ENCODE measurements at regions of chr12 and their contacts with region 1.

Region 1: GRCh38 chr12:53757095-53757770 is 5.5 kb upstream of the CISTR start:
- DNase-seq: no peak
- H3K4me3 ChIP-seq: no peak overlapping the region
- CTCF ChIP-seq: peak; percentile 85

Region 2: DNA sequence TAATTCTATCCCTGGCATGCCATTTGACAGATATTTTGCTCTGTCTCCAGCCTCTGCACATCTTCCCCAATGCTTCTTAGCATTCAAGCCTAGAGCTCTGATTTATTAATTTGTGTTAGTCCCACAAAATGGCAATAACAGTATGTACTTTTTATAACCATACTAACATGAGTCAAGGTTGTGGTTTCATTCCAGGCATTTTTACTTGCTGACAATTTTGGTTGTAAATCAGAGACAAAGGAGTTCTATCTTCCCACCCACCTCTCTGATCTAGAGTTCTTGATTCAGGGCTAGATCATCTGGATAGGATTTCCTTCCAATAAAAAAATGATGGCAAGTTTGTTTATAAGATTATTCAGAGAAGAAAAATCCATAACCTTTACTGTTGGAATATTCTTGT is 13.0 kb after region 1 on chr12:
- CTCF ChIA-PET with region 1: interaction called, 29 read pairs
- POLR2A ChIA-PET with region 1: interaction called, 3 read pairs
- DNase-seq: peak; percentile 90
- H3K4me3 ChIP-seq: no peak overlapping the region
- CTCF ChIP-seq: no peak

Region 3: DNA sequence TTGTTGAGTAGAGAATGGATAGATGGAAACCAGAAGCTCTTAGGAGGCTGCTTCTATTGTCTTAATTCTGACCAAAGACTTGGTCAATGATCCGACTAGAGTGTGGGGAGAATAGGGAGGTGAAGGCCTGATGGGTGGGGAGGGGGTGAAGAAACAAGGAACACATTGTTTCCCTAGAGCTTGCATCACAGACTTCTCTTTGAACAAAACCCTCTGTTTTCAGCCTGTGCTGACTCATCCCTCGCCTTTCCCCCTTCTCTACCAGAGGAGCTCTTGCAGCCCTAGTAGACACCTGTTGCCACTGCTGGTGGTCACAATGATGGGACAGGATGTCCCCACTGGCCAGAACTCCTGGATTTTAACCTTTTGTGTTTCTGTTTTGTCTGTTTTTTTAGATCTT is 41.3 kb after region 1 on chr12:
- CTCF ChIA-PET with region 1: no interaction called
- POLR2A ChIA-PET with region 1: no interaction called
- DNase-seq: no peak
- H3K4me3 ChIP-seq: no peak overlapping the region
- CTCF ChIP-seq: no peak

Region 4: GRCh38 chr12:53995378-53996239 is 238.4 kb after region 1 on chr12:
- CTCF ChIA-PET with region 1: interaction called, 10 read pairs
- POLR2A ChIA-PET with region 1: no interaction called
- DNase-seq: no peak
- H3K4me3 ChIP-seq: peak overlapping the region; percentile 96
- CTCF ChIP-seq: no peak